ENCODE measurements at regions of chr9 and their contacts with region 1.

Region 1: DNA sequence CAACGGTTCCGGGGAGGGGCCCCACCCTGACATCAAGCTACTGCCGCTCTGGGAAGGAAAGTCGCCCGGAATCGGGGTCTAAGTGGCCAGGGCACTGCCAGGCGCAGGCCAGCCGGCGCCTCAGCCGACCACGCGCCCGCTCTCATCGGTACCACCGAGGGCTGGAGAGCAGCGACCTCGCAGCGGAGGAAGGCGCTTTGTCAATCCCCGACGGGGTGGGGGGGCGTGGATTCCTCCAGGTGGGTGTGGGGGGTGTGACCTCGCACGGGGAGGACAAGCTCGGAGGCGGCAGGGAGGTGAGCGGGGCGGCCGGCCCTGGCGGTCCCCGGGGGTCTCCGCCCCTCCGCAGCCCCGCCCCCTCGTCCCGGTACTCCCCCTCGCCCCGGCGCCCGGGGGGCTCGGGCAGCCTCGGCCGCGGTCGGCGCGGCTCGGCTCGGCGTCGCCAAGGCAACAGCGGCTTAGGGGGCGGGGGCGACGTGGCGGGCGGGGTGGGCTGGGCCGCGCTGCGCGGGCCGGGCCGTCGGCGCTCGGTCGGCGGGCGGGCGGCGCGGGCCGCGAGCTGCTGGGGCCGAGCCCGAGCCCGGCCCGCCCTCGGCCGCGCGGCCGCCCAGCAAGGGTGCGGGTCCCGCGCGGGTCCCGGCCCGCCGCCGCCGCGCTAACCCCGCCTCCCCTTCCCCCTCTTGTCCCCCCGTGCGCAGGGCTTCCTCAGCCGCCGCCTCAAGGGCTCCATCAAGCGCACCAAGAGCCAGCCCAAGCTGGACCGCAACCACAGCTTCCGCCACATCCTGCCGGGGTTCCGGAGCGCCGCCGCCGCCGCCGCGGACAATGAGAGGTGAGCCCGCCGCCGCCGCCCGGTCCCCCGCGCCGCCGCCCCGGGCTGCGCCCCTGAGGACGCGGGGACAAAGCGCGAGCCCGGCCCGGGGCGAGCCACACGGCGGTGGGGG is 47.5 kb downstream of the DAB2IP start:
- DNase-seq: peak; percentile 45
- H3K4me3 ChIP-seq: peak overlapping the region; percentile 59 to 62 (median 60)
- H3K27ac ChIP-seq: peak overlapping the region; percentile 84
- H3K4me1 ChIP-seq: peaks cover 13% of the 10 kb centered on the region
- H3K27me3 ChIP-seq: no peaks in the 10 kb centered on the region
- CTCF ChIP-seq: no peak
- POLR2A ChIP-seq: no peak

Region 2: DNA sequence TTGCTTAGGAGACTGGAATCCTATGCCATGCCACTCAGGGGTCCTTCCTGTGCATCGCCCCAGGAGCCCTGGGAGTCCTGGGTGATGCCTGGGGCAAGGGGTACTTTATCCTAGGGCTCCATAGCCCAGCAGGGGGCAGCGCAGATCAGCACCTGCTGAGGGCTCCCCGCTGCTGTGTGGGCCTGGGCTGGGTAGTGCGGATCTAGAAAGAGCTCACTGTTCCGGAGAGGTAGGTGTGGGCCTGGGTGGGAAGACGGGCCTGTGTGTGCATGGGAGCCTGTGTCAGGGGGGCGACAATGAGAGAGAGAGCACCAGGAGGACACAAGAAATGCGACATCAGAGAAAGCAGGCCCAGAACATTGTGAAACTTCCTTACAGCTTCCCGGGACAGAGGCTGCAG is 58.8 kb before region 1 on chr9:
- CTCF ChIA-PET with region 1: interaction called, 62 read pairs
- POLR2A ChIA-PET with region 1: no interaction called
- dilution Hi-C with region 1: no loop called
- intact Hi-C with region 1: loop called (anchors 1 kb)
- DNase-seq: peak; percentile 36
- H3K4me3 ChIP-seq: no peak overlapping the region
- H3K27ac ChIP-seq: no peak overlapping the region
- H3K4me1 ChIP-seq: peaks cover 17% of the 10 kb centered on the region
- H3K27me3 ChIP-seq: no peaks in the 10 kb centered on the region
- CTCF ChIP-seq: peak; percentile 72 to 80
- POLR2A ChIP-seq: no peak

Region 3: DNA sequence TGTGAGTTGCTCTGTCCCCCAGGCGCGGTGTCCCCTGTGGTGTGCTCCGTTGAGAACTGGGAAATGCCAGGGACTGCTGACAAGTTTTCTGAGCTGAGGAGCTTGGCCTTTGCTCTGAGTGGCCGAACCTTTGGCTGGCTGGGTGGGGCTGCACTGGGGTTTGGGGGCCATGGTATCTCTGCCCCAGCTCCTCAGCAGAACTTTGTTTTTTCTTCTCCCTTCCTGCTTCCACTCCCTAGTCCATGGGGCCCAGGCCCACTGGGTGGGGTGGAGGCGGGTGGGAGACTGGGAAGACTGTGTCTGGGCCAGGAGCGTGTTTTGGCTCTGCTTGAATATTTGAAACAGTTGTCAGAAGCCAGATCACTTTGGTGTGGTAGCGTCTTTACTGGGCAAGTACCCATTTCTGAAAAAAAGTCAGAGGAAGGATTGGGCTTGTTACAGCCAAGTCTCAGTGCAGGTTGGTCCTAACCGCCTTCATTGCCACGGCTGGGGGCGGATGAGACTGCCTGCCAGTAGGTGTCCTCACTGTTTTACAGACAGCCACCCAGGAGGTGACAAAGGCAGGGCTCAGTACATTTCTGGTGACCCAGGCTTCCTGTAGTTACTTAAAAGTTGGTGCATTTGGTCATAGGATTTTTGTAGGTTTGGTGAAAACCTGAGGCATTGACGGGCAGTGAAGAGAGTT is 45.2 kb after region 1 on chr9:
- CTCF ChIA-PET with region 1: interaction called, 8 read pairs
- POLR2A ChIA-PET with region 1: no interaction called
- dilution Hi-C with region 1: no loop called
- intact Hi-C with region 1: loop called (anchors 1 kb)
- DNase-seq: peak; percentile 57
- H3K4me3 ChIP-seq: peak overlapping the region; percentile 13 to 60 (median 38)
- H3K27ac ChIP-seq: peak overlapping the region; percentile 70
- H3K4me1 ChIP-seq: peaks cover 28% of the 10 kb centered on the region
- H3K27me3 ChIP-seq: no peaks in the 10 kb centered on the region
- CTCF ChIP-seq: peak; percentile 32 to 48
- POLR2A ChIP-seq: no peak

Region 4: GRCh38 chr9:121929893-121930875 is 231.3 kb after region 1 on chr9:
- CTCF ChIA-PET with region 1: interaction called, 16 read pairs
- POLR2A ChIA-PET with region 1: no interaction called
- dilution Hi-C with region 1: no loop called
- intact Hi-C with region 1: no loop called
- DNase-seq: peak; percentile 28
- H3K4me3 ChIP-seq: no peak overlapping the region
- H3K27ac ChIP-seq: no peak overlapping the region
- H3K4me1 ChIP-seq: no peaks in the 10 kb centered on the region
- H3K27me3 ChIP-seq: no peaks in the 10 kb centered on the region
- CTCF ChIP-seq: peak; percentile 18 to 45
- POLR2A ChIP-seq: no peak

Region 5: DNA sequence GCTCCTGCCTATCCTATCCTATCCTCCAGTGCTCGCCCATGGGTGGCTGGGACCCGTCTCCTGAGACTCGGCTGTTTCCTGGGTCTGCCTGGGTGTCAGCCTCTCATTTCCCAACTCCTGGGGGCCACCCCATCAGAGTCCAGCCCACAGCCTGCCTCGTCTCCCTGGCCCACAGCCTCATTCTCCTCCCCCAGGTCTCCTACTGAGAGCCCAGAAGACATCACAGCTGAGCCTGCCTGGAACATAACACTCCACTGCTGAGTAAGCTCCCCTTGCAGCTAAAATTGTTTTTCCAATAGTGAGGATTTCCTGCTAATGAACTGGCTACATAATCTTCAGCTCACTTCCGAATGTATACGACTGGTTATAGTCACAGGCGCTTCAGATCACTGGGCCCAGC is 298.9 kb after region 1 on chr9:
- CTCF ChIA-PET with region 1: interaction called, 11 read pairs
- POLR2A ChIA-PET with region 1: no interaction called
- dilution Hi-C with region 1: no loop called
- intact Hi-C with region 1: loop called (anchors 1 kb)
- DNase-seq: peak; percentile 73
- H3K4me3 ChIP-seq: no peak overlapping the region
- H3K27ac ChIP-seq: no peak overlapping the region
- H3K4me1 ChIP-seq: peaks cover 10% of the 10 kb centered on the region
- H3K27me3 ChIP-seq: no peaks in the 10 kb centered on the region
- CTCF ChIP-seq: no peak
- POLR2A ChIP-seq: no peak

Measured in endothelial cell of umbilical vein (primary cell).